RWPE1 (cell line): ENCODE measurements at regions of chr5 and their contacts with region 1.

Region 1: GRCh38 chr5:102799017-102799416 is 43.9 kb downstream of the PAM start:
- DNase-seq: no peak
- H3K27ac ChIP-seq: no peak overlapping the region
- CTCF ChIP-seq: no peak

Region 2: GRCh38 chr5:102700120-102700831 is 98.7 kb before region 1 on chr5:
- CTCF ChIA-PET with region 1: no interaction called
- POLR2A ChIA-PET with region 1: no interaction called
- DNase-seq: no peak
- H3K27ac ChIP-seq: no peak overlapping the region
- CTCF ChIP-seq: no peak

Region 3: DNA sequence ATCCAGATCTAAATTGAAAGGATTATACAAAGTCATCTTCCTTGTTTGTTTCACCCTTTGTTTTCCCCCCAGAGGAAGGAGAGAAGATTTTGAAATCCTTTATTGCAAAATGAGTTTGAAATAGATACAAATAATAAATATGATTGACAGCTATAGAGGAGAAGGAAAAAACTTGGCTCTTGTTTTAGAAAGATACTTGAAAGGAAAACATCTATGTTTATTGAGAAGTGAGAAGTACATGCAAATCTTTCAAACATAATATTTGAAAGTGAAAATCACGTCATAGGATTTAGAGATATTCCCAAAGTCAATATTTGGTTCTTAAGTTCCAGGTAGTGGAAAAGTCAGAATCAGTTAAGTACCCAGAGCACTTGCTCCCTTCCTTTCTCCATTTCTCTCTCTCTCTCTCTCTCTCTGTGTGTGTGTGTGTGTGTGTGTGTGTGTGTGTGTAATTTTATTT is 16.7 kb before region 1 on chr5:
- CTCF ChIA-PET with region 1: interaction called, 11 read pairs
- POLR2A ChIA-PET with region 1: no interaction called
- DNase-seq: no peak
- H3K27ac ChIP-seq: no peak overlapping the region
- CTCF ChIP-seq: no peak